ENCODE measurements at regions of chr14 and their contacts with region 1.

Region 1: DNA sequence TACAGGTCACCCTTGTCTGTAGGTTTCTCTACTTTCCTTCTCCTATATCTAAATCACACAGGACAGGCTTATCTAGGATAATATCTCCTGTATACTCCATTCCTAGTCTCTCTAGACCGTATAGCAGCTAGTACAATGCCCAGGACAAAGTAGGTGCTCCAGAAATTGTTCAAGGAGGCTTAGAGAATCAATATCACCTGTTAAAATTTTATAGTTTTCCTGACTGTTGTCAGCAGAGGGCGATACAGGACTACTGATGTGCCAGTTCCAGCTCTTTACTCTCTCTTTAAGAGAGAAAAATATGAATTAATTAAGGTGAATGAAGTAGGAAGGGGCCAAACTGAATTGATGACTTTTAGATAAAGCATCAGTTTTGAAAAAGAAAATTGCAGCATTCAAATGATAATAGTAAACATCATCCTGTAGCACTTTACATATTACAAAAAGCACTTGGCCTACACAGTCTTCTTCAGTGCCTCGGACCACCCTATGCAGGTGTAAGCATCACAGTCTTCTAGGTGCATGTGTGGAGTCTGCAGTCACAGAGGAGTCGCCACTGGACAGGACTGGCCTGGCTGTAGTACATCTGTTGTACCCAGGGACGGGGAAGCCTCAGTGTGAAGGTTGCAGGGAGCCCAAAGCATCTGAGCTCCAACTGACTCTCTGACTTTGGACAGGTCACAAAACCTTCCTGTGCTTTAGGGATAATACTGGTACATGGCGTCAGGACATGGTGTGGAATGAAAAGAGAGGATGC is 61.9 kb upstream of the MAX start:
- DNase-seq: peak; percentile 60
- H3K27ac ChIP-seq: no peak overlapping the region
- CTCF ChIP-seq: peak; percentile 72

Region 2: DNA sequence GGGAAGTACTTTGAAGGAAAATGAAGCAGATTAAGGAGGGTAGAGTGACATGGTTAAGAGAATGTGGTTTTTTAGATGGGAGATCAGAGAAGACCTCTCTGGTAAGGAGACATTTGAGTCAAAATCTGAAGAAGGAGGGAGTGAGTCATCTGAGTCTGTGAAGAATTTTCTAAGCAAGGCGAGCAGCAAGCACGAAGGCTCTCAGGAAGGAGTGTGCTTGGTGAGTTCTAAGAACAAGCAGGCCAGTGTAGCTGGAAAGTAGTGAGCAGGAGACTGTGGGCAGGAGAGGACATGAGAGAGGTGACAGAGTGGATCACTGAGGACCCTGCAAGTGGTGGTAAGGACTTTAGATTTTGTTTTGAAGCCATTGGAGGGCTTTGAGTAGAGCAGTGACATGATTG is 171.9 kb after region 1 on chr14:
- CTCF ChIA-PET with region 1: no interaction called
- POLR2A ChIA-PET with region 1: no interaction called
- DNase-seq: no peak
- H3K27ac ChIP-seq: no peak overlapping the region
- CTCF ChIP-seq: no peak

Region 3: GRCh38 chr14:65412032-65412846 is 248.0 kb after region 1 on chr14 and contains the start of gene FUT8:
- CTCF ChIA-PET with region 1: interaction called, 11 read pairs
- POLR2A ChIA-PET with region 1: interaction called, 6 read pairs
- DNase-seq: peak; percentile 84
- H3K27ac ChIP-seq: peak within 1 kb of the TSS; percentile 94
- CTCF ChIP-seq: peak; percentile 74

Region 4: GRCh38 chr14:65824285-65824977 is 660.2 kb after region 1 on chr14:
- CTCF ChIA-PET with region 1: interaction called, 13 read pairs
- POLR2A ChIA-PET with region 1: no interaction called
- DNase-seq: peak; percentile 54
- H3K27ac ChIP-seq: no peak overlapping the region
- CTCF ChIP-seq: peak; percentile 89

Measured in RWPE1 (cell line).